PC-3 (cell line): ENCODE measurements at regions of chr2 and their contacts with region 1.

Region 1: GRCh38 chr2:161556440-161556839 is 67.8 kb upstream of the SLC4A10 start:
- DNase-seq: peak; percentile 44
- ATAC-seq: 0 out of 2 replicates have a peak, but pooled peaks have one; percentile 35
- H3K4me3 ChIP-seq: no peak overlapping the region
- H3K27ac ChIP-seq: no peak overlapping the region
- H3K4me1 ChIP-seq: no peaks in the 10 kb centered on the region
- H3K27me3 ChIP-seq: no peaks in the 10 kb centered on the region
- CTCF ChIP-seq: peak; percentile 60

Region 2: GRCh38 chr2:161283926-161284325 is 272.5 kb before region 1 on chr2:
- CTCF ChIA-PET with region 1: no interaction called
- POLR2A ChIA-PET with region 1: no interaction called
- intact Hi-C with region 1: loop called (anchors 2 kb)
- DNase-seq: no peak
- ATAC-seq: no peak
- H3K4me3 ChIP-seq: no peak overlapping the region
- H3K27ac ChIP-seq: no peak overlapping the region
- H3K4me1 ChIP-seq: no peaks in the 10 kb centered on the region
- H3K27me3 ChIP-seq: no peaks in the 10 kb centered on the region
- CTCF ChIP-seq: no peak

Region 3: GRCh38 chr2:161388146-161388779 is 168.2 kb before region 1 on chr2:
- CTCF ChIA-PET with region 1: no interaction called
- POLR2A ChIA-PET with region 1: no interaction called
- intact Hi-C with region 1: no loop called
- DNase-seq: no peak
- ATAC-seq: no peak
- H3K4me3 ChIP-seq: no peak overlapping the region
- H3K27ac ChIP-seq: no peak overlapping the region
- H3K4me1 ChIP-seq: no peaks in the 10 kb centered on the region
- H3K27me3 ChIP-seq: no peaks in the 10 kb centered on the region
- CTCF ChIP-seq: no peak